WTC11 (cell line): ENCODE measurements at regions of chr19 and their contacts with region 1.

Region 1: DNA sequence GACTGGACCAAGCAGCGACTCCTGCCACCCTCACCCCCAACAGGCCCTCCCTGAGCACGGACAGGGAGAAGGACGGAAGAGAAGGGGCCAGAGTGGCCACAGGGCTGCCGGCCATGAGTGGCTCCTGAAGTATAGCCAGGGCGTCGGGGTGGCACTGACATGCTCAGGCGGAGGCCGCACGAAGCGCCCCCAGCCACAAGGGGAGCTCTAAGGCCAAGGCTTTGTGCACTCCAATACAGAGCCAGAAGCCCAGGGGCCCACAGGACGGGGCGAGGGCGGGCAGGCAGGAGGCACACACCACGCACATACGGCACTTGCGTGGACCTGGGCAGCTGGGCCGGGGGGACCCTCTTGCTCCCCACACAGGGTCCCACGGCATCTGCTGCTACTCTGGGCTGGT is 52.0 kb downstream of the KLF2 start:
- DNase-seq: peak; percentile 76
- ATAC-seq: peak; percentile 97
- H3K4me3 Mint-ChIP-seq: no peak overlapping the region
- H3K27ac Mint-ChIP-seq: no peak overlapping the region
- H3K4me1 Mint-ChIP-seq: no peaks in the 10 kb centered on the region
- H3K27me3 Mint-ChIP-seq: no peaks in the 10 kb centered on the region
- CTCF ChIP-seq: peak; percentile 42; the same call in 1 of the 2 replicates

Region 2: DNA sequence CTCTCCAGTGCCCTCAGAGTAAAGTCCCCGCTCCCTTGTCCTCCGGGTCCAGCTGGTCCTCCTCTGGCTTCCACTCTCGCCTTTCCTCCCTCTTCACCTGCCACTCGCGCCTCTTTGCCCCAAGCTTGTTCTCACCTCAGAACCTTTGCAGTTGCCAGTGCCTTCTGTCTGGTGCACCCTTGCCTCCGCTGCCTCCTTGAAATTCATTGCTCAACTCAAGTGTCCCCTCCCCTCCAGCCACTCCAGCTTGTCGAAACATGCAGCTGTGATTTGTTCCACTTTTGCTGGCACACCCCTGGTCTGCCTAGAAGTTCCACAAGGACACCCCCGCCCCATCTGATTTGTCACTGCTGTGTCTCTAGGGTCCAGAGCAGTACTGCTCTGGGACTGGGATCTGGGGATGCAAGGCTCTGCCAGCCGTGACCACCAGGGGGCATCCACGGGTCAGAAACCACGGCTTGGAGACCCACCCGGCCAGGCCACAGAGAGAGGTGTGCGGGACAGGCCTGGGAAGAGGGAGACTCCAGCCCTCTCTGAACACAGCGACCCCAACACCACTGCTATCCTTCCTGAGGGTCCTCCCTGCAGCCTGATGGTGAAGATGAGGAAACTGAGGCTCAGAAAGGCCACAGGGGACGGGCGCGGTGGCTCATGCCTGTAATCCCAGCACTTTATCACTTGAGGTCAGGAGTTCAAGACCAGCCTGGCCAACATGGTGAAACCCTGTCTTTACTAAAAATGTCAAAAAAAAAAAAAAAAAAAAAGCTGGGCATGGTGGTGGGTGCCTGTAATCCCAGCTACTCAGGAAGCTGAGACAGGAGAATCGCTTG is 129.1 kb before region 1 on chr19:
- CTCF ChIA-PET with region 1: interaction called, 23 read pairs
- POLR2A ChIA-PET with region 1: no interaction called
- DNase-seq: peak; percentile 95
- ATAC-seq: peak; percentile 99
- H3K4me3 Mint-ChIP-seq: no peak overlapping the region
- H3K27ac Mint-ChIP-seq: 0 out of 2 replicates have a peak overlapping the region, but pooled peaks have one; percentile 48
- H3K4me1 Mint-ChIP-seq: no peaks in the 10 kb centered on the region
- H3K27me3 Mint-ChIP-seq: no peaks in the 10 kb centered on the region
- CTCF ChIP-seq: peak; percentile 80

Region 3: GRCh38 chr19:16366433-16367260 is 10.0 kb before region 1 on chr19:
- CTCF ChIA-PET with region 1: interaction called, 20 read pairs
- POLR2A ChIA-PET with region 1: no interaction called
- DNase-seq: no peak
- ATAC-seq: no peak
- H3K4me3 Mint-ChIP-seq: no peak overlapping the region
- H3K27ac Mint-ChIP-seq: peak overlapping the region; percentile 39
- H3K4me1 Mint-ChIP-seq: peaks cover 28% of the 10 kb centered on the region
- H3K27me3 Mint-ChIP-seq: no peaks in the 10 kb centered on the region
- CTCF ChIP-seq: no peak